ENCODE measurements at regions of chr2 and their contacts with region 1.

Region 1: DNA sequence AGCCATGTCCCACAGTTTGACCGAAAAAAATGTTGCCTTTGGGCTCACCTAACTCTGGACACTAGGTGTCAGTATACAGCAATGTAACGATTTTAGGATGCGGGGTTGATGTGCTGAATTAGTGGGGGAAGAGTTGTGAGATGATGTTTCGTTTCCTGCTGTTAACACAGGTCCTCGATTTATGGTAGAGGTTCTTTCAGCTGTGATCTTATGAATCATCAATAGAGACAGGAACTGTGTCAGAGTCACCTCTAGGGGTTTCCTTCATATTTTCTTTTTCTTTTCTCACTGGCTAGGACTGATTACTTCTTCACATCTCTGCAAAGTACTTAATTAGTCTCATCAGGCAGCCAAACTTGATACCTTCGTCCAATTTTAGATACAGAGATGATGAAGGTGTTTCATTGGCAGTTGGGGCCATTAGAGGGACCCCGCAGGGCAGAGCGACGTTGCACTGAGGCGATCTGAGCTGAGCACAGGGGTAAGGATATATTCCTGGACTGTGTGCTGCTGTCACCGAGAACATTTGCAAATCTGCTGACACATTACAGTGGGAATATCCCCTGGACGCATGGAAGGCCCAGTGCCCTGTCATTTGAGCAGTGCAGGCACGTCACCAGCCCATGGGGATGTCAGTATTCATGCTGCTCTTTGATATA is 10.2 kb upstream of the MMADHC start:
- DNase-seq: peak; percentile 62
- H3K4me3 ChIP-seq: peak overlapping the region in 2 of 4 donors; percentile 20 to 24
- H3K27ac ChIP-seq: no peak overlapping the region
- H3K4me1 ChIP-seq: peaks cover 0 to 4% (median 0%) of the 10 kb centered on the region in 4 donors
- H3K27me3 ChIP-seq: no peaks in the 10 kb centered on the region
- CTCF ChIP-seq: peak; percentile 69 to 78 (median 75)
- EP300 ChIP-seq: no peak
- POLR2A ChIP-seq: no peak

Region 2: GRCh38 chr2:149441255-149441654 is 156.5 kb before region 1 on chr2:
- intact Hi-C with region 1: no loop called
- DNase-seq: no peak
- H3K4me3 ChIP-seq: no peak overlapping the region
- H3K27ac ChIP-seq: no peak overlapping the region
- H3K4me1 ChIP-seq: no peaks in the 10 kb centered on the region
- H3K27me3 ChIP-seq: no peaks in the 10 kb centered on the region
- CTCF ChIP-seq: no peak
- EP300 ChIP-seq: no peak
- POLR2A ChIP-seq: no peak

Region 3: GRCh38 chr2:151238527-151239487 is 1641.0 kb after region 1 on chr2:
- intact Hi-C with region 1: loop called (anchors 5 kb)
- DNase-seq: peak; percentile 83
- H3K4me3 ChIP-seq: no peak overlapping the region
- H3K27ac ChIP-seq: no peak overlapping the region
- H3K4me1 ChIP-seq: peaks cover 0 to 7% (median 2%) of the 10 kb centered on the region in 4 donors
- H3K27me3 ChIP-seq: no peaks in the 10 kb centered on the region
- CTCF ChIP-seq: peak; percentile 74 to 85 (median 80)
- EP300 ChIP-seq: no peak
- POLR2A ChIP-seq: no peak

Measured in sigmoid colon (tissue), 7 donors.